Naive thymus-derived CD4-positive, alpha-beta T cell (primary cell): ENCODE measurements at regions of chr12 and their contacts with region 1.

Region 1: DNA sequence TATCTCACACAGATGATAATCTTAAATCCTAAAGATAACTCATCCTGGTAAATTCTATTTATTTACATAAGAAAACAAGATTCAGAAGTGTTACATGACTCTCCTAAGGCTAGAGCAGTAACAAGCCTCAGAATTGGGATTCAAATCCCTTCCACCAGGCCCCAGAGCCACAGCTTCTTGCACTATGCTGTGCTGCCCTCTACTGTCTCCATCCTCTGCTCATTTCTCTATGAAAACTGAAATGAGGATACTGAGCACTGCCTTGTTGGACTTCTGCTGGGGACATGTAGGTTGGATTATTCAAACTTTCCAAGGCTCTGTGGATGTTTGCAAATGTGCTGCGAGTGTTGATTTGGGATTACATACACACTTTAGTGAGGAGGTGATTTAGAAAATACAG is 23.5 kb upstream of the C12orf50 start:
- DNase-seq: peak in 1 of 9 donors; percentile 17
- ATAC-seq: no peak
- H3K4me3 ChIP-seq: no peak overlapping the region
- H3K4me3 Mint-ChIP-seq: no peak overlapping the region
- H3K27ac ChIP-seq: no peak overlapping the region
- H3K27ac Mint-ChIP-seq: peak overlapping the region in 2 of 9 donors; percentile 4 to 14
- H3K4me1 ChIP-seq: no peaks in the 10 kb centered on the region
- H3K4me1 Mint-ChIP-seq: no peaks in the 10 kb centered on the region
- H3K27me3 ChIP-seq: no peaks in the 10 kb centered on the region
- H3K27me3 Mint-ChIP-seq: no peaks in the 10 kb centered on the region

Region 2: GRCh38 chr12:87848248-87848868 is 204.3 kb before region 1 on chr12:
- CTCF ChIA-PET with region 1: no interaction called
- POLR2A ChIA-PET with region 1: no interaction called
- intact Hi-C with region 1: loop called in 1 of 2 experiments (anchors 2 kb)
- DNase-seq: peak in 6 of 9 donors; percentile 3 to 39 (median 12)
- ATAC-seq: peak; percentile 54
- H3K4me3 ChIP-seq: no peak overlapping the region
- H3K4me3 Mint-ChIP-seq: no peak overlapping the region
- H3K27ac ChIP-seq: no peak overlapping the region
- H3K27ac Mint-ChIP-seq: no peak overlapping the region
- H3K4me1 ChIP-seq: no peaks in the 10 kb centered on the region
- H3K4me1 Mint-ChIP-seq: peaks cover 0 to 1% (median 0%) of the 10 kb centered on the region in 7 donors
- H3K27me3 ChIP-seq: no peaks in the 10 kb centered on the region
- H3K27me3 Mint-ChIP-seq: peaks cover 0 to 7% (median 3%) of the 10 kb centered on the region in 5 donors

Region 3: GRCh38 chr12:87982208-87982607 is 70.5 kb before region 1 on chr12:
- CTCF ChIA-PET with region 1: no interaction called
- POLR2A ChIA-PET with region 1: no interaction called
- intact Hi-C with region 1: no loop called
- DNase-seq: no peak
- ATAC-seq: no peak
- H3K4me3 ChIP-seq: no peak overlapping the region
- H3K4me3 Mint-ChIP-seq: no peak overlapping the region
- H3K27ac ChIP-seq: no peak overlapping the region
- H3K27ac Mint-ChIP-seq: no peak overlapping the region
- H3K4me1 ChIP-seq: no peaks in the 10 kb centered on the region
- H3K4me1 Mint-ChIP-seq: no peaks in the 10 kb centered on the region
- H3K27me3 ChIP-seq: no peaks in the 10 kb centered on the region
- H3K27me3 Mint-ChIP-seq: peaks cover 0 to 16% (median 8%) of the 10 kb centered on the region in 5 donors

Region 4: GRCh38 chr12:88092771-88093170 is 40.1 kb after region 1 on chr12:
- CTCF ChIA-PET with region 1: no interaction called
- POLR2A ChIA-PET with region 1: no interaction called
- intact Hi-C with region 1: loop called in 1 of 2 experiments (anchors 5 kb)
- DNase-seq: no peak
- ATAC-seq: no peak
- H3K4me3 ChIP-seq: no peak overlapping the region
- H3K4me3 Mint-ChIP-seq: no peak overlapping the region
- H3K27ac ChIP-seq: no peak overlapping the region
- H3K27ac Mint-ChIP-seq: no peak overlapping the region
- H3K4me1 ChIP-seq: no peaks in the 10 kb centered on the region
- H3K4me1 Mint-ChIP-seq: no peaks in the 10 kb centered on the region
- H3K27me3 ChIP-seq: no peaks in the 10 kb centered on the region
- H3K27me3 Mint-ChIP-seq: no peaks in the 10 kb centered on the region

Region 5: GRCh38 chr12:88113871-88114270 is 61.2 kb after region 1 on chr12:
- CTCF ChIA-PET with region 1: no interaction called
- POLR2A ChIA-PET with region 1: no interaction called
- intact Hi-C with region 1: no loop called
- DNase-seq: no peak
- ATAC-seq: no peak
- H3K4me3 ChIP-seq: no peak overlapping the region
- H3K4me3 Mint-ChIP-seq: no peak overlapping the region
- H3K27ac ChIP-seq: no peak overlapping the region
- H3K27ac Mint-ChIP-seq: peak overlapping the region in 2 of 9 donors; percentile 5 to 22
- H3K4me1 ChIP-seq: no peaks in the 10 kb centered on the region
- H3K4me1 Mint-ChIP-seq: peaks cover 0 to 4% (median 0%) of the 10 kb centered on the region in 7 donors
- H3K27me3 ChIP-seq: no peaks in the 10 kb centered on the region
- H3K27me3 Mint-ChIP-seq: no peaks in the 10 kb centered on the region